ENCODE measurements at regions of chr16 and their contacts with region 1.

Region 1: GRCh38 chr16:49161191-49161590 is 120.4 kb downstream of the CBLN1 start:
- DNase-seq: no peak
- H3K4me3 ChIP-seq: no peak overlapping the region
- H3K27ac ChIP-seq: no peak overlapping the region
- H3K4me1 ChIP-seq: no peaks in the 10 kb centered on the region
- H3K27me3 ChIP-seq: no peaks in the 10 kb centered on the region
- CTCF ChIP-seq: no peak

Region 2: GRCh38 chr16:49055824-49056545 is 105.2 kb before region 1 on chr16:
- CTCF ChIA-PET with region 1: no interaction called
- dilution Hi-C with region 1: loop called (anchors 5 kb)
- in situ Hi-C with region 1: no loop called
- intact Hi-C with region 1: no loop called
- DNase-seq: no peak
- H3K4me3 ChIP-seq: no peak overlapping the region
- H3K27ac ChIP-seq: no peak overlapping the region
- H3K4me1 ChIP-seq: no peaks in the 10 kb centered on the region
- H3K27me3 ChIP-seq: peaks cover 2% of the 10 kb centered on the region
- CTCF ChIP-seq: no peak

Region 3: GRCh38 chr16:49081554-49081953 is 79.6 kb before region 1 on chr16:
- CTCF ChIA-PET with region 1: no interaction called
- dilution Hi-C with region 1: no loop called
- in situ Hi-C with region 1: no loop called
- intact Hi-C with region 1: no loop called
- DNase-seq: peak; percentile 32
- H3K4me3 ChIP-seq: no peak overlapping the region
- H3K27ac ChIP-seq: no peak overlapping the region
- H3K4me1 ChIP-seq: no peaks in the 10 kb centered on the region
- H3K27me3 ChIP-seq: no peaks in the 10 kb centered on the region
- CTCF ChIP-seq: no peak

Measured in mammary epithelial cell (primary cell).